Activated CD8-positive, alpha-beta memory T cell treated with anti-CD3 and anti-CD28 coated beads, Interleukin-2, amount 10 ng/mL, durations not matched to agents 7 days and 5 days (primary cell): ENCODE measurements at regions of chr1 and their contacts with region 1.

Region 1: DNA sequence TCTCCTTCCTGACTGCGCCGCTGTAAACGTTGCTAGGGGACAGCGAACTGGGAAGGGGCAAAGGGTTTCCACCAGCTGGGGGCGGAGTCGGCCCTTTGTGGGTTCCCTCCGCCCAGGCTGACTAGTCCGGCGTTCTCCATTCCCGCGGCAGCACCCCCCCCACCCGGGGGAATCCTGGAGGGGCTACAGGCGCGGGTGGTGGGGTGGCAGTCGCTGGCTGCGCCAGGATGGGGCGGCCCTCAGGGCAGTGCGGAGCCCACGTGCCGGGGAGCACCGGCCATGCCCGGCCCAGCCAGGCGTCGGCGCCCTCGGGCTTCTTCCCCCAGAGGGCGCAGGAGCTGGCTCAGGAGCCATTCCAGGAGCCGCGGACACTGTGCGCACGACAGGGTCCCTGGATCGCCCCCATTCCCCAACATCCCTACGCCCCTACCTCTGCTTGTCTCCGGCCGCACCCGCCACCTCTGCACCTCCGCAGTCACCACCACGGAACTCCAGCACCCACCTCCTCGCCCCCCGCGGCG is 476 bp downstream of the BATF3 start:
- DNase-seq: peak; percentile 78
- ATAC-seq: peak; percentile 77
- H3K4me3 Mint-ChIP-seq: peak overlapping the region; percentile 83
- H3K27ac Mint-ChIP-seq: peak overlapping the region; percentile 92
- H3K4me1 Mint-ChIP-seq: peaks cover 75% of the 10 kb centered on the region
- H3K27me3 Mint-ChIP-seq: no peaks in the 10 kb centered on the region

Region 2: DNA sequence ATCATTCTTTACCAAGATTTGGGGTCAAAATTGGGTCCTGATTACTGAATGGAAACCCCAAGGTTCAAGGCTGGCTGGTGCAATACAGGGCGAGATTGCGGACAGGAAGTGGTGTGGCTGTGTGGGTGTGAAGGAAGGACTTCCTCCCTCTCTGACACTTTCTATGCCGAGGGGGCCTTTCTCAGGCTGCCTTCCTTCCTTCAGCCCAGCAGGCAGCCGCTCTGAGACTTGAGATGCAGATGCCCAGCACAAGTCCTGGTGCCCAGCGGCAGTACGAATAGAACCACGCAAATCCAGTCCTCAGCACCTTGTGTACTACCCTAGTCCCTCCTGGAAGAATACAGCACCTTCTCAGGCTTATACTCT is 15.8 kb before region 1 on chr1:
- CTCF ChIA-PET with region 1: interaction called, 24 read pairs
- DNase-seq: peak; percentile 96
- ATAC-seq: peak; percentile 78
- H3K4me3 Mint-ChIP-seq: peak overlapping the region; percentile 56
- H3K27ac Mint-ChIP-seq: peak overlapping the region; percentile 98
- H3K4me1 Mint-ChIP-seq: peaks cover 92% of the 10 kb centered on the region
- H3K27me3 Mint-ChIP-seq: no peaks in the 10 kb centered on the region

Region 3: DNA sequence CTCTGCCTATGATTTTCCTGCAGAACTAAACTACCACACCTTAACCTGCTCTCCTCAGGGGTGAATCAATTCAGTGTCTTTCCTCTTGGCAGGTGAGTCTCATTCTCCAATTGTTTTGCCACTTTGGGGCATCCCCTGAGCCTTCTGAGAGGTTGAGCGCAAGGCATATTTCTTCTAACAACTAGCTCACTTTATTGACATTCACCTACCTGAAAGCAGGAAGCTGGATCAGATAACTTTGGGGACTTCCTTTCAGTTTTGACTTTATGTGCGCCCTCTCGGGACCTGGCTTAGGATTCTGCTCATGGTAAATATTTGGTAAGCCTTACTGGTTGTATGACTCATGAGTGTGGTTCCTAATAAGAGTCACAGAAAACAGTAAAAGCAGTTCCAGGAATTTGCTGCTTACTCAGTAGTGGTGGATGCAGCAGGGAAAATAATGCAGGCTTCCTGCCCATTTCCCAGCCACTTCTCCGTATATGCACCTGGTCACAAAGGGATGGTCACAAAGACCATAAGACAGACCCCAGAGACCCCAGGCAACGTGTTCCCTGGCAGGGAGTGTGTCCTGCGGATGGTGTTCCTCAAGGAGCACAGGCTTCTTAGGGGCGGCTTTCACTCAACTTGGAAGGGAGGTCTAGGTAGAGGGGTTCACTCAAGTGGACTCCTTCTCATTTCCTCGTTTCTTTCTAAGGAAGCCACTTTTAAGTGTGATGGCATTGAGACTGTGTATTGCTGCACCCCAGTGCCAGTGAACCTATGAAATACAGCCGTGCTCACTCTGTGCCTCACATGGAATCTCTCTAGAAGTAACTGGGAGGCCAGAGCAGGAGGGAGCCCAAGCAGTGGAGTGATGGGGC is 22.5 kb after region 1 on chr1:
- CTCF ChIA-PET with region 1: interaction called, 23 read pairs
- DNase-seq: peak; percentile 81
- ATAC-seq: peak; percentile 85
- H3K4me3 Mint-ChIP-seq: peak overlapping the region; percentile 42
- H3K27ac Mint-ChIP-seq: peak overlapping the region; percentile 84
- H3K4me1 Mint-ChIP-seq: peaks cover 70% of the 10 kb centered on the region
- H3K27me3 Mint-ChIP-seq: no peaks in the 10 kb centered on the region

Region 4: DNA sequence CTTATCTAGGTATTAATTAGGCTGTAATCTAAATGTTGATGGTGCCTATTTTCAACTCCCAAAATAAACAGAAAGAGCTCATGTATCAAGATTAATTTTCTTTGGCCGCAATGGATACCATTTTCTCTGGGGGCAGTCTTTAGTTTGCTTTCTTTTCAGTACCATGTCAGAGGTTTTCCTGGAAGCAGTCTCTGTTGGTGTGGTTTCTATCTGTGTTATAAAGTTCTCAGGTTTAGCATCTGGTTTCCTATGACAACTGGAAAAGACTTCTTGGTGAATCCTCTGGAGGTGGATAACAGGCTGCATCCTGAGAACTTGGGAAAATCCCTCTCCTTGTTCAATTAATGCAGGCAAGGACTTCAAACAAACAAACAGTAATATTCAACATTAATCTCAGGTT is 39.2 kb after region 1 on chr1:
- CTCF ChIA-PET with region 1: interaction called, 16 read pairs
- DNase-seq: no peak
- ATAC-seq: peak; percentile 83
- H3K4me3 Mint-ChIP-seq: peak overlapping the region; percentile 56
- H3K27ac Mint-ChIP-seq: peak overlapping the region; percentile 97
- H3K4me1 Mint-ChIP-seq: peaks cover 42% of the 10 kb centered on the region
- H3K27me3 Mint-ChIP-seq: no peaks in the 10 kb centered on the region

Region 5: DNA sequence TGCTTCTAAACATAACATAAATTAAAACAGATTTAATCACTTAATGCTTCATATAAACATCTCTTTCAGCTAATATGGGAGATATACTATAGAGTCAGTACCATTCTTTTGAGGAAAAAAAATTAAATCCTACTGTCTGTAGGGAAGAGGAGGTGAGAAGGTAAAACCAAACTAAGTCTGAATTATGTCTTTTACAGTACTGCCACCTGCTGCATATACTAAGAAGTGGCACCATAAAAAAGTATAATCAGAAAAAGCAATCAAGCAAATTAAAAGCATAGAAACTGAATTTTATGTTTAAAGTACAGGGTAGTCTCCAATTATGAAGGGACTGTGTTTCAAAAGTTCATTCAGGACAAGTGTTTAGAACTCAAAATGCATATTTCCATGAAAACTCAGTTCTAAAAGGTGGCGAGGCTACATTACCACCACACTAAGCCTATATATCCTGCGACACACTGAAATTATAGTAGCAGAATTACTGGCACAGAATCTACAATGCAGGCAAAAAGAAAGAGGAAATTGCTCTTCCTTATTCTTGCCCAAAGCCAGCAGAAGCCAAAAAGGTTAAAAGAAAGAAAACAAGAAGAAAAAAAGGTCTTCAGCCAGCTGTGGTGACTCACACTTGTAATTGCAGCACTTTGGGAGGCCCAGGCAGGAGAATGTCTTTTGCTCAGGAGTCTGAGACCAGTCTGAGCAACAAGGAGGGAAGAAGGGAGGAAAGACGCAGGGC is 83.4 kb after region 1 on chr1:
- CTCF ChIA-PET with region 1: interaction called, 10 read pairs
- DNase-seq: no peak
- ATAC-seq: peak; percentile 60
- H3K4me3 Mint-ChIP-seq: no peak overlapping the region
- H3K27ac Mint-ChIP-seq: no peak overlapping the region
- H3K4me1 Mint-ChIP-seq: peaks cover 36% of the 10 kb centered on the region
- H3K27me3 Mint-ChIP-seq: no peaks in the 10 kb centered on the region

Region 6: GRCh38 chr1:213192026-213192425 is 492.9 kb after region 1 on chr1:
- CTCF ChIA-PET with region 1: no interaction called
- DNase-seq: no peak
- ATAC-seq: no peak
- H3K4me3 Mint-ChIP-seq: no peak overlapping the region
- H3K27ac Mint-ChIP-seq: no peak overlapping the region
- H3K4me1 Mint-ChIP-seq: no peaks in the 10 kb centered on the region
- H3K27me3 Mint-ChIP-seq: no peaks in the 10 kb centered on the region